CD8-positive, alpha-beta T cell (primary cell): ENCODE measurements at regions of chr17 and their contacts with region 1.

Region 1: GRCh38 chr17:49788478-49789242 is at the start of gene KAT7:
- DNase-seq: peak; percentile 94 to 100 (median 98)
- ATAC-seq: peak; percentile 82
- H3K4me3 ChIP-seq: peak within 1 kb of the TSS; percentile 84 to 98
- H3K4me3 Mint-ChIP-seq: peak within 1 kb of the TSS; percentile 99
- H3K27ac ChIP-seq: peak within 1 kb of the TSS; percentile 96 to 99
- H3K27ac Mint-ChIP-seq: peak within 1 kb of the TSS; percentile 100
- H3K4me1 ChIP-seq: peaks cover 45% of the 10 kb centered on the region
- H3K4me1 Mint-ChIP-seq: peaks cover 54% of the 10 kb centered on the region
- H3K27me3 ChIP-seq: no peaks in the 10 kb centered on the region
- H3K27me3 Mint-ChIP-seq: no peaks in the 10 kb centered on the region
- CTCF ChIP-seq: no peak
- total RNA-seq, gene KAT7: 170 to 189 TPM

Region 2: GRCh38 chr17:49414622-49415350 is 373.9 kb before region 1 on chr17 and contains the start of gene PHB1:
- CTCF ChIA-PET with region 1: no interaction called
- POLR2A ChIA-PET with region 1: no interaction called
- intact Hi-C with region 1: loop called in 1 of 2 experiments (anchors 1 kb)
- DNase-seq: peak; percentile 86 to 98 (median 94)
- ATAC-seq: peak; percentile 98
- H3K4me3 ChIP-seq: peak within 1 kb of the TSS; percentile 80 to 96
- H3K4me3 Mint-ChIP-seq: peak within 1 kb of the TSS; percentile 99
- H3K27ac ChIP-seq: peak within 1 kb of the TSS; percentile 43 to 61
- H3K27ac Mint-ChIP-seq: peak within 1 kb of the TSS; percentile 93
- H3K4me1 ChIP-seq: peaks cover 12% of the 10 kb centered on the region
- H3K4me1 Mint-ChIP-seq: peaks cover 31% of the 10 kb centered on the region
- H3K27me3 ChIP-seq: no peaks in the 10 kb centered on the region
- H3K27me3 Mint-ChIP-seq: no peaks in the 10 kb centered on the region
- CTCF ChIP-seq: no peak
- total RNA-seq, gene PHB1: 26.3 to 27.0 TPM

Region 3: DNA sequence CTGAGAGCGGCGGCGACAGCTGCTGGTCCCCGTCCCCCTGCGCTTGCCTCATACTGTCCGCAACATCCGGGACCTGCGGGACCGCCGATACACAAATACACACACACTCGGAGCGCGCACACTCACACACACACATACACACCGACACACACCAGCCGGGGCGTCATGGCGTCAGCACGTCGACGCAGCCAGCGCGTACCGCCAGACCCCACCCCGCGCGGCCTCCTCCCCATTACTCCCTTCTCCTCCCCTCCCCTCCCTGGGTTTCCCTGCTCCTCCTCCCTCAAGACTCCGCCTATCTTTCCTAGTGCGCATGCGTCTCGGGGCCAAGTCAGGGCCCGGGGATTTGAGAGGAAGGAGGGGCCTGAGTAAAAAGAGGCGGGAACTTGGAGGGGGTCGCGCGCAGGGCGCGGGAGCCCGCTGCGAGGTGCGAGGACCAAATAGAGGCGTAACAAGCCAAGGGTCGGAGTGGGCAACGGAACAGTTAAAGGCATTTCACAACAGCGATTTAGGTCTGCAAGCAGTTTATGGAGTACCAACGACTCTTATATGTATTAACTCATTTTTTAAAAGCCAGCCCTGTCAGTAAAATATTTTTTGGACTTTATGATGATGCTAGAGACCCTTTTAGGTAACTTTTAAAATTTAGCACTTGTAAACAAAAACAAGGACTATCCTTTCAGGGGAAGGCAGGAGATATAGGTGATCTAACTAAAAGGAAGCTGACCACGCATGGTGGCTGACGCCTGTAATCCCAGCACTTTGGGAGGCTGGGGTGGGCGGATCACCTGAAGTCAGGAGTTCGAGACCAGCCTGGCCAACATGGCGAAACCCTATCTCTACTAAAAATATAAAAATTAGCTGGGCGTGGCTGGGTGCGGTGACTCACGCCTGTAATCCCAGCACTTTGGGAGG is 110.5 kb before region 1 on chr17 and contains the start of gene SPOP:
- CTCF ChIA-PET with region 1: no interaction called
- POLR2A ChIA-PET with region 1: interaction called, 4 read pairs
- intact Hi-C with region 1: loop called (anchors 1 kb)
- DNase-seq: peak; percentile 97 to 100 (median 99)
- ATAC-seq: peak; percentile 94
- H3K4me3 ChIP-seq: peak within 1 kb of the TSS; percentile 76 to 81
- H3K4me3 Mint-ChIP-seq: peak within 1 kb of the TSS; percentile 97
- H3K27ac ChIP-seq: peak within 1 kb of the TSS; percentile 91 to 98
- H3K27ac Mint-ChIP-seq: peak within 1 kb of the TSS; percentile 100
- H3K4me1 ChIP-seq: peaks cover 29% of the 10 kb centered on the region
- H3K4me1 Mint-ChIP-seq: peaks cover 49% of the 10 kb centered on the region
- H3K27me3 ChIP-seq: no peaks in the 10 kb centered on the region
- H3K27me3 Mint-ChIP-seq: no peaks in the 10 kb centered on the region
- CTCF ChIP-seq: no peak
- total RNA-seq, gene SPOP: 30.5 to 34.3 TPM

Region 4: DNA sequence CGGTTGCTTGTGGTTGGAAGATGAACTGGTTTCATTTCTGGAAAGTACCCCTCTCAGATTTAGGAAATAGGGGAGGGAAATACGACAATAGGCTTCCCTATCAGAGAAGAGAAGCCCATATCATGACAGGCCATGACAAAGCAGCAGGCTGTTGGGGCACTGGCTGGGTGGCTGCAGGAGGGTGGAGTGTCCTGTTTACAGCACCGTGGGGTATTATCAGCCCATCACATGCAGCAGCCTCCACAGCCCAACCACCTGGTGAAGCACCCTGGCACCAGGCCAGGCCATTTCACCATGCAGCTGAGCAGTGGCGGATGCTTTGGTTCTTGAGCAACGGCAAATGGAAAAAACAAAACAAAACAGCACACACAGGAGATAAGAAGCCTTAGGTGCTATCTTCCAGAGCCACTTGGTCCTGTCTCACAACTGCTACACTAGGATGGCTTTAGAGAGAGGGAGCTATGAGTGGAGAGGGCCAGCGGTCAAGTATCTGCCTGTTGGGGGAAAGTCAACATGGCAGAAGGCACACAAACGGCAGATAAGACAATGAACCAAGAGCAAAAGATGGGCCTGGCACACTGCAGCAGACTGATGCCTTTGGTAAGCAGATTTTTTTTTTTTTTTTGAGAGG is 48.9 kb before region 1 on chr17:
- CTCF ChIA-PET with region 1: interaction called, 3 read pairs
- POLR2A ChIA-PET with region 1: interaction called, 14 read pairs
- intact Hi-C with region 1: loop called (anchors 1 kb)
- DNase-seq: peak; percentile 91 to 99 (median 98)
- ATAC-seq: peak; percentile 95
- H3K4me3 ChIP-seq: peak overlapping the region; percentile 42 to 54
- H3K4me3 Mint-ChIP-seq: peak overlapping the region; percentile 90
- H3K27ac ChIP-seq: peak overlapping the region; percentile 77 to 96
- H3K27ac Mint-ChIP-seq: peak overlapping the region; percentile 100
- H3K4me1 ChIP-seq: peaks cover 83% of the 10 kb centered on the region
- H3K4me1 Mint-ChIP-seq: peaks cover 87% of the 10 kb centered on the region
- H3K27me3 ChIP-seq: no peaks in the 10 kb centered on the region
- H3K27me3 Mint-ChIP-seq: no peaks in the 10 kb centered on the region
- CTCF ChIP-seq: no peak

Region 5: GRCh38 chr17:49763735-49764558 is 24.7 kb before region 1 on chr17 and contains the start of gene FAM117A:
- CTCF ChIA-PET with region 1: interaction called, 15 read pairs
- POLR2A ChIA-PET with region 1: interaction called, 26 read pairs
- intact Hi-C with region 1: loop called (anchors 1 kb)
- DNase-seq: peak; percentile 90 to 99 (median 95)
- ATAC-seq: peak; percentile 84
- H3K4me3 ChIP-seq: peak within 1 kb of the TSS; percentile 67 to 68
- H3K4me3 Mint-ChIP-seq: peak within 1 kb of the TSS; percentile 93
- H3K27ac ChIP-seq: peak within 1 kb of the TSS; percentile 46 to 69
- H3K27ac Mint-ChIP-seq: peak within 1 kb of the TSS; percentile 91
- H3K4me1 ChIP-seq: peaks cover 43% of the 10 kb centered on the region
- H3K4me1 Mint-ChIP-seq: peaks cover 48% of the 10 kb centered on the region
- H3K27me3 ChIP-seq: no peaks in the 10 kb centered on the region
- H3K27me3 Mint-ChIP-seq: no peaks in the 10 kb centered on the region
- CTCF ChIP-seq: no peak
- total RNA-seq, gene FAM117A: 23.4 to 28.7 TPM

Region 6: DNA sequence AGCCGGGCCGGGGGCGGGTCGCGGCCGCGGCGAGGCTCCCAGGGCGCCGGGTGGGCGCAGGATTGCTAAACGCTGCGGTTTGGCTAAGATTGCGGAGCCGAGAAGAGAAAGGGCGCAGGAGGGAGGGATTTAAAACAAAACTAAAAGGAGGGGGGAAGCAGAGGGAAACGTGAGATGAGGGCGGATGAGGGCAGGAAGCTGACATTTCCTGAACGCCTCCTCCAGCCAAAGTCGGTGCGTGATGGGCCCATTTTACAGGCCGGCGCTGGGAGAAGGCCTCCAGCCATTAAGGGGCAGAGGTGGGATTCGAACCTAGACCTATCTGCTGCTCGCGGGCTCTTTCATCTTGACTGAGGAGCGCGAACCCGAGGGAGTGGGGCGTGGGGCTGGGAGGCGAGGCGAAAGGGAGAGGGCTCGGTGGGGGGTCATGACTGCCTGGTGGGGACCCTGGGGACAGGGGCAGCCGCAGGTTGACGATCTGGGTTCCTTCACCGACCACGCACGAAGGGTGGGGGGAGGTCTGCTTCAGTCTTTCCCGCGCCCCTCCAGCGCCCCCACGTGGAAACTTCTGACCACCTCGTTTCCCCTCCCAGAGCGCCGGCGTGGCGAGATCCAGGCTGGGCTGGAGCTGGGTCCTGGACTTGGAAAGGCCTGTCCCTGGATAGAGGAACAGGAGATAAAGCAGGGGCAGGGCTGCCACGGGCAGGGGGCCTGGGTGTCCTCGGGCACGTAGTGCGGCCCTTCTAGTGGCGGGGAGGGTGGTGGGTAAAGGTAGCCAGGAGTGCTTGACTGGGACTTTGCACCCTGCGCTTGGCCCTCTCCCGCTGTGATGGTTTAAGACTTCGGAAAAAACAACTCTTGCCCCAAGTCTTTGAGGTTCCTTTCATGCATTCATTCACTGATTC is 63.0 kb after region 1 on chr17:
- CTCF ChIA-PET with region 1: interaction called, 3 read pairs
- POLR2A ChIA-PET with region 1: interaction called, 4 read pairs
- intact Hi-C with region 1: loop called (anchors 1 to 5 kb)
- DNase-seq: peak; percentile 47 to 87 (median 76)
- ATAC-seq: peak; percentile 77
- H3K4me3 ChIP-seq: peak overlapping the region; percentile 73 to 83
- H3K4me3 Mint-ChIP-seq: peak overlapping the region; percentile 92
- H3K27ac ChIP-seq: peak overlapping the region; percentile 59 to 66
- H3K27ac Mint-ChIP-seq: peak overlapping the region; percentile 89
- H3K4me1 ChIP-seq: peaks cover 17% of the 10 kb centered on the region
- H3K4me1 Mint-ChIP-seq: peaks cover 15% of the 10 kb centered on the region
- H3K27me3 ChIP-seq: no peaks in the 10 kb centered on the region
- H3K27me3 Mint-ChIP-seq: no peaks in the 10 kb centered on the region
- CTCF ChIP-seq: peak; percentile 72